ENCODE measurements at regions of chrX and their contacts with region 1.

Region 1: DNA sequence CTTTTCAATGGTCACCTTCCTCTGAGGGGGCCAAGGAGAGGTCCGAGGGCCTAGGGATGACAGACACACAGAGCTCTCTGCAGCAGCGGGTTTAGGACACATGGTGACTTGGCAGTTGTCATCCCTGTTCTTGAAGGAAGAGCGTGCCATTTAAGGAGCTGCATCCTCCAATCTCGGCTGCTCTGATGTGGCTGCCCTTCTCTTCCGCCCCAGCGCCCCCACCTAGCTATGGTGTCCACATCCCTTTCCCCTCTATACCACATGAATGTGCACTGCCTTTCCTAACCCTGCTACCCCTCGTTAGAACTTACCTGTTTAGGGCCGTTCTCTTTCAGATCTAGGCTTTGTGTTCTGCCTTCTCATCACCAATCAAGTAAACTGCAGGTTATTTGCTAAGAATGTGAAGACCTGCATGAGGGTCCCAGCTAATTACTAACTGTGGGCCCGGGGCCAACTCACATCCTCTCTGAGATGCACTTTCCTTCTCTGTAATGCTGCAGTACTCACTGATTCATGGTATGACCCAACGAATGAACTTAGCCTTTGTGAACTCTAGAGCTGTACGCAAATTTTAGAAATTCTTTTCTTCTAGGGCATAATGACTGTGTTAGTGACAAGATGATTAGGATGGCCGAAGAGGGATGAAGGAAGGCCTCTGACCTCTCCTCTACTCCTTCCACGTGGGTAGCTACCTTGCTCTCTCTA is 38.2 kb downstream of the CHST7 start:
- DNase-seq: peak; percentile 4 to 66 (median 34)
- ATAC-seq: peak; percentile 87
- H3K4me3 ChIP-seq: no peak overlapping the region
- H3K4me3 Mint-ChIP-seq: peak overlapping the region; percentile 35
- H3K27ac ChIP-seq: no peak overlapping the region
- H3K27ac Mint-ChIP-seq: no peak overlapping the region
- H3K4me1 ChIP-seq: peaks cover 25% of the 10 kb centered on the region
- H3K4me1 Mint-ChIP-seq: peaks cover 26% of the 10 kb centered on the region
- H3K27me3 ChIP-seq: no peaks in the 10 kb centered on the region
- H3K27me3 Mint-ChIP-seq: peaks cover 19% of the 10 kb centered on the region
- CTCF ChIP-seq: no peak

Region 2: GRCh38 chrX:45435481-45435880 is 1176.3 kb before region 1 on chrX:
- CTCF ChIA-PET with region 1: no interaction called
- POLR2A ChIA-PET with region 1: no interaction called
- intact Hi-C with region 1: no loop called
- DNase-seq: no peak
- ATAC-seq: no peak
- H3K4me3 ChIP-seq: no peak overlapping the region
- H3K4me3 Mint-ChIP-seq: no peak overlapping the region
- H3K27ac ChIP-seq: no peak overlapping the region
- H3K27ac Mint-ChIP-seq: no peak overlapping the region
- H3K4me1 ChIP-seq: no peaks in the 10 kb centered on the region
- H3K4me1 Mint-ChIP-seq: no peaks in the 10 kb centered on the region
- H3K27me3 ChIP-seq: no peaks in the 10 kb centered on the region
- H3K27me3 Mint-ChIP-seq: peaks cover 2% of the 10 kb centered on the region
- CTCF ChIP-seq: no peak

Region 3: DNA sequence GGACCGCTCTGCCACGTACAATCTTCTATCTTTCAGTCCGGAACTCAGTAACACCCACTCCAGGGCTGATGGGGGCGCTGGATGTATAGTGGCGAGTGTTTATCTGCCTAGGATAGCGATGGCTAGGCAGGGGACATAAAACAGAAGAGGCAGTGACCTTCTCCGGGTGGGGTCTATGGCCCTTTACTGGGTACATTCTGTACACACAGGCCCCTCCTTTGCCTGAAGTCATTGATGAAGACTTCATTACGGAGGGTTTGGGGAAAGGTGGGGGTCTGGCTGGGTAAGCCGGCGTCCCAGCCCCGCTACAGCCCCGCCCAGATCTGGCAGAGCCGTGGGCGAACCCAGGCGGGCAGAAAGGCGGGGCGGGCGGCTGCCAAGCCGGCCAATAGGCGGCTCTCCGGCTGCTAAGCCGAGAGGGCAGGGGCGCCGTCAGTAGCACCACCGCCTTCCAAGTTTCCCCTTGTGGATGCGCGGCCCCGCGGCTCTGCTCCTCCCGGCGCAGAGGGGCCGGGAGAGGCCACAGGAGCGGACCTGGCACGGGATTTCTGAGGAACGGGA is 38.4 kb before region 1 on chrX and contains the start of gene CHST7:
- CTCF ChIA-PET with region 1: no interaction called
- POLR2A ChIA-PET with region 1: interaction called, 4 read pairs
- intact Hi-C with region 1: loop called in 1 of 2 experiments (anchors 5 kb)
- DNase-seq: peak; percentile 15 to 77 (median 54)
- ATAC-seq: peak; percentile 57
- H3K4me3 ChIP-seq: peak within 1 kb of the TSS; percentile 63 to 64
- H3K4me3 Mint-ChIP-seq: peak within 1 kb of the TSS; percentile 79
- H3K27ac ChIP-seq: peak within 1 kb of the TSS; percentile 45 to 77
- H3K27ac Mint-ChIP-seq: peak within 1 kb of the TSS; percentile 87
- H3K4me1 ChIP-seq: peaks cover 27% of the 10 kb centered on the region
- H3K4me1 Mint-ChIP-seq: peaks cover 34% of the 10 kb centered on the region
- H3K27me3 ChIP-seq: no peaks in the 10 kb centered on the region
- H3K27me3 Mint-ChIP-seq: peaks cover 3% of the 10 kb centered on the region
- CTCF ChIP-seq: no peak
- total RNA-seq, gene CHST7: 9.4 to 9.7 TPM

Region 4: GRCh38 chrX:46803140-46803539 is 191.3 kb after region 1 on chrX:
- CTCF ChIA-PET with region 1: no interaction called
- POLR2A ChIA-PET with region 1: no interaction called
- intact Hi-C with region 1: no loop called
- DNase-seq: no peak
- ATAC-seq: no peak
- H3K4me3 ChIP-seq: no peak overlapping the region
- H3K4me3 Mint-ChIP-seq: no peak overlapping the region
- H3K27ac ChIP-seq: no peak overlapping the region
- H3K27ac Mint-ChIP-seq: no peak overlapping the region
- H3K4me1 ChIP-seq: no peaks in the 10 kb centered on the region
- H3K4me1 Mint-ChIP-seq: no peaks in the 10 kb centered on the region
- H3K27me3 ChIP-seq: no peaks in the 10 kb centered on the region
- H3K27me3 Mint-ChIP-seq: no peaks in the 10 kb centered on the region
- CTCF ChIP-seq: no peak

Region 5: DNA sequence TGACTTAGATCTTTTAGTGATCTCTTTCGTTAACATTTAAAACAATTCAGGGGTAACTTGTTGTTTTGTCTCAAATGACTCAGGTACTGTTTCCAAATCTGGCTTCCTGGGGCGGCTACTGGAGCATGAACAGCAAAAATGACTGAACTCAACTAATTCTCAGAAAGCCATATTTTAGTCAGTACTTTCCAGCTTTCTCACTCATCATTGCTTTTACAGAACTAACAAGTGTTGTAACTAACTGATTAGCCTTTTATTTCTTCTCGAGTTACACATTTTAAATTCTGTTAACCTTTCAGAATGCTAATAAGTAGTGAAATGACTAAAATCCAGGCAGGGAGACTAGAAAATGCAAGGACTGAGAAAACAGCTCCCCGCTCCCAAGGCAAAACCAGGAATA is 355.7 kb after region 1 on chrX:
- CTCF ChIA-PET with region 1: no interaction called
- POLR2A ChIA-PET with region 1: no interaction called
- intact Hi-C with region 1: no loop called
- DNase-seq: no peak
- ATAC-seq: no peak
- H3K4me3 ChIP-seq: no peak overlapping the region
- H3K4me3 Mint-ChIP-seq: no peak overlapping the region
- H3K27ac ChIP-seq: no peak overlapping the region
- H3K27ac Mint-ChIP-seq: no peak overlapping the region
- H3K4me1 ChIP-seq: no peaks in the 10 kb centered on the region
- H3K4me1 Mint-ChIP-seq: no peaks in the 10 kb centered on the region
- H3K27me3 ChIP-seq: no peaks in the 10 kb centered on the region
- H3K27me3 Mint-ChIP-seq: peaks cover 3% of the 10 kb centered on the region
- CTCF ChIP-seq: no peak

Measured in CD8-positive, alpha-beta T cell (primary cell).